CD8-positive, alpha-beta T cell (primary cell): ENCODE measurements at regions of chr19 and their contacts with region 1.

Region 1: DNA sequence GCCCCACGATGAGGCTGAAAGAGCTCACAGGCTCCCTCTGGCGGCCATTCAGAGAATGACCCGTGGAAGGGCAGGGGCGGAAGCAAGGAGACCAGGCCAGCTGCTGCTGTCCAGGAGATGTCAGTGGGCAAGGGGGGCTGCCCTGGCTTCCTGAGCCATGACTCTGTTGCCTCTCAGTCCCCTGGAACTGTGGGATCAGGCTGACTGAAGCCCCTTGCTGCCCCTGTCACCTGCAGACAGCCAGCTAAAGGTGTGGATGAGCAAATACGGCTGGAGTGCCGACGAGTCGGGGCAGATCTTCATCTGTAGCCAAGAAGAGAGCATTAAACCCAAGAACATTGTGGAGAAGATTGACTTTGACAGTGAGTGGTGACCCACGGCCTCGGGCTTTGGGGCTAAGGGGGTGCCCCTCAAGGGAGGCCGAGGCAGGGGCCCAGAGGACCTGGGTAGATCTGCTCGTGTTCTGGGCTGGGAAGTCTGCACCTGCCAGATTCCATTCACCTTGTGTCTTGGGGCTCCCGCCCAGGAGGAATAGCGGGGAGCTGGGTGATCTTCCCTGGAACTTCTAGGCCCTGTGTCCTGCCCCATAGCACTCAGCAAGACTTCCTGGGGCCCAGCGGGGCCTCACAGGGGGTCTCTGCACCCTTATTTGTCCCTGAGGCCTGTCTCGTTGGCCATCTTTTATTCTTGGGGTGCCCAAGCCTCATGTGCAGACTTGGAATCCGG is 12.5 kb upstream of the ACTN4 start:
- DNase-seq: peak; percentile 49 to 84 (median 73)
- ATAC-seq: peak; percentile 30
- H3K4me3 ChIP-seq: no peak overlapping the region
- H3K4me3 Mint-ChIP-seq: peak overlapping the region; percentile 47
- H3K27ac ChIP-seq: peak overlapping the region in 1 of 2 experiments; percentile 63
- H3K27ac Mint-ChIP-seq: peak overlapping the region; percentile 46
- H3K4me1 ChIP-seq: peaks cover 26% of the 10 kb centered on the region
- H3K4me1 Mint-ChIP-seq: peaks cover 24% of the 10 kb centered on the region
- H3K27me3 ChIP-seq: no peaks in the 10 kb centered on the region
- H3K27me3 Mint-ChIP-seq: no peaks in the 10 kb centered on the region
- CTCF ChIP-seq: peak; percentile 88

Region 2: DNA sequence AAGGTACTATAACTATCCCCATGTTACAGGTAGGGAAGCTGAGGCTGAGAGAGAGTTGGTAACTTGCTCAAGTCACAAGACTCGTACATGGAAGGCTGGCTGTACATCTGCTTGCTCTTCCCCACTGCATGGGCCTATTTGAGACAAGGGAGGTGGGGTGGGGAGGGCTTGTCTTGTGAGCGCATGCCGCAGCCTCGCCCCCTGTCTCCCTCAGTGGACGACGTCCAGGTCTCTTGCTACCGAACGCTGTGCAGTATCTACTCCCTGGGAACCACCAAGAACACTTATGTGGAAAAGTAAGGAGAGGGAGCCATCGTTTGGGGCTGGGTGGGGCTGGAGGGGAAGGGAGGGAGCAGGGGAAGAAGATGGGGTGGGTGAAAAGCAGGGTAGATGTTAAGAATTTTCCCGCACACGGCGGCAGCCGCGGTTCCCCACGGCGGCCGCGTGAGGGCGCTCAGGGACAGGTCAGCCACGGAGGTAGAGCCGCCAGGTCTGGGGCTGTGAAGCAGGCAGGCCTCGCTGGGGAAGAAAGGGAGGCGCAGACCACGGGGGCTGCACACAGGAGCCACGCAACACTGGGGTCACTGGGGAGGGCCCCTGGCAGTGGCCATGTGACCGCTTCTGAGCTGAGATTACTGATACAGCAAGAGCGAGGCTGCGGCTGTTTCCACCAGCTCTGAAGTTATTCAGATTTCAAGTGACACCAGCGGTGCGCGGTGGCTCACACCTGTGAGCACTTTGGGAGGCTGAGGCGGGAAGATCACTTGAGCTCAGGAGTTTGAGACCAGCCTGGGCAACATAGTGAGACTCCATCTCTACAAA is 119.9 kb before region 1 on chr19:
- CTCF ChIA-PET with region 1: interaction called, 91 read pairs
- POLR2A ChIA-PET with region 1: interaction called, 3 read pairs
- intact Hi-C with region 1: loop called (anchors 1 kb)
- DNase-seq: peak; percentile 53 to 89 (median 73)
- ATAC-seq: peak; percentile 99
- H3K4me3 ChIP-seq: no peak overlapping the region
- H3K4me3 Mint-ChIP-seq: no peak overlapping the region
- H3K27ac ChIP-seq: no peak overlapping the region
- H3K27ac Mint-ChIP-seq: no peak overlapping the region
- H3K4me1 ChIP-seq: peaks cover 9% of the 10 kb centered on the region
- H3K4me1 Mint-ChIP-seq: peaks cover 7% of the 10 kb centered on the region
- H3K27me3 ChIP-seq: peaks cover 0 to 4% of the 10 kb centered on the region in 2 experiments
- H3K27me3 Mint-ChIP-seq: peaks cover 2% of the 10 kb centered on the region
- CTCF ChIP-seq: peak; percentile 92

Region 3: GRCh38 chr19:38551450-38551813 is 83.5 kb before region 1 on chr19:
- CTCF ChIA-PET with region 1: interaction called, 14 read pairs
- POLR2A ChIA-PET with region 1: no interaction called
- intact Hi-C with region 1: no loop called
- DNase-seq: peak in 3 of 9 experiments; percentile 27 to 59 (median 36)
- ATAC-seq: peak; percentile 49
- H3K4me3 ChIP-seq: no peak overlapping the region
- H3K4me3 Mint-ChIP-seq: no peak overlapping the region
- H3K27ac ChIP-seq: no peak overlapping the region
- H3K27ac Mint-ChIP-seq: peak overlapping the region; percentile 73
- H3K4me1 ChIP-seq: peaks cover 4% of the 10 kb centered on the region
- H3K4me1 Mint-ChIP-seq: peaks cover 26% of the 10 kb centered on the region
- H3K27me3 ChIP-seq: no peaks in the 10 kb centered on the region
- H3K27me3 Mint-ChIP-seq: no peaks in the 10 kb centered on the region
- CTCF ChIP-seq: no peak

Region 4: DNA sequence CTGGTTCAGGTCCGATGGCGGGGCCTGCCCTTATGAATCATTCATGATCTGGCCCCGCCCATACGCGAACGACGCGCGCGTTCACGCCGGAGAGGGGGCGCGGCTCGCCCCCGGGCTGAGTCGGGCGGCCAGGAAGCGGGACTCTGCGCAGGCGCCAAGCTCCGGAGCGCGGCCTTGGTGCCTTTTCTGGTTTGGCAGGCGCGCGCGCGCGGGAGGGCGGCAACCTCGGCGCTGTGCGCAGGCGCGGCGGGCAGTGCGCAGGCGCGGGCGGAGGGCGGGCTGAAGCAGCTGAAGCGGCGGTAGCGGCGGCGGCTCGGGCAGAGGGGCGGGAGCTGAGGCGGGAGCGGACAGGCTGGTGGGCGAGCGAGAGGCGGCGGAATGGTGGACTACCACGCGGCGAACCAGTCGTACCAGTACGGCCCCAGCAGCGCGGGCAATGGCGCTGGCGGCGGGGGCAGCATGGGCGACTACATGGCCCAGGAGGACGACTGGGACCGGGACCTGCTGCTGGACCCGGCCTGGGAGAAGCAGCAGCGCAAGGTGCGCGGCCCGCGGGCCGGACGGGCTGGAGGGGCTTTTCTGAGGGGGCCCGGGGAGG is 12.5 kb after region 1 on chr19 and contains the start of gene ACTN4:
- CTCF ChIA-PET with region 1: interaction called, 49 read pairs
- POLR2A ChIA-PET with region 1: interaction called, 3 read pairs
- intact Hi-C with region 1: loop called in 1 of 2 experiments (anchors 1 kb)
- DNase-seq: peak; percentile 99 to 100 (median 100)
- ATAC-seq: peak; percentile 94
- H3K4me3 ChIP-seq: peak within 1 kb of the TSS; percentile 83 to 89
- H3K4me3 Mint-ChIP-seq: peak within 1 kb of the TSS; percentile 91
- H3K27ac ChIP-seq: peak within 1 kb of the TSS; percentile 49 to 63
- H3K27ac Mint-ChIP-seq: peak within 1 kb of the TSS; percentile 73
- H3K4me1 ChIP-seq: peaks cover 23% of the 10 kb centered on the region
- H3K4me1 Mint-ChIP-seq: peaks cover 32% of the 10 kb centered on the region
- H3K27me3 ChIP-seq: peaks cover 7 to 16% of the 10 kb centered on the region in 2 experiments
- H3K27me3 Mint-ChIP-seq: peaks cover 31% of the 10 kb centered on the region
- CTCF ChIP-seq: no peak
- total RNA-seq, gene ACTN4: 110 to 111 TPM

Region 5: GRCh38 chr19:38891771-38892170 is 256.9 kb after region 1 on chr19:
- CTCF ChIA-PET with region 1: interaction called, 3 read pairs
- POLR2A ChIA-PET with region 1: no interaction called
- intact Hi-C with region 1: loop called in 1 of 2 experiments (anchors 5 kb)
- DNase-seq: no peak
- ATAC-seq: no peak
- H3K4me3 ChIP-seq: no peak overlapping the region
- H3K4me3 Mint-ChIP-seq: no peak overlapping the region
- H3K27ac ChIP-seq: no peak overlapping the region
- H3K27ac Mint-ChIP-seq: no peak overlapping the region
- H3K4me1 ChIP-seq: peaks cover 3% of the 10 kb centered on the region
- H3K4me1 Mint-ChIP-seq: peaks cover 9% of the 10 kb centered on the region
- H3K27me3 ChIP-seq: no peaks in the 10 kb centered on the region
- H3K27me3 Mint-ChIP-seq: no peaks in the 10 kb centered on the region
- CTCF ChIP-seq: no peak